ENCODE measurements at regions of chr1 and their contacts with region 1.

Region 1: GRCh38 chr1:184222652-184223052 is 164.2 kb upstream of the C1orf21 start:
- DNase-seq: no peak
- H3K4me3 ChIP-seq: peak overlapping the region; percentile 32
- H3K27ac ChIP-seq: no peak overlapping the region
- H3K27me3 ChIP-seq: peaks cover 2% of the 10 kb centered on the region
- CTCF ChIP-seq: peak; percentile 97

Region 2: DNA sequence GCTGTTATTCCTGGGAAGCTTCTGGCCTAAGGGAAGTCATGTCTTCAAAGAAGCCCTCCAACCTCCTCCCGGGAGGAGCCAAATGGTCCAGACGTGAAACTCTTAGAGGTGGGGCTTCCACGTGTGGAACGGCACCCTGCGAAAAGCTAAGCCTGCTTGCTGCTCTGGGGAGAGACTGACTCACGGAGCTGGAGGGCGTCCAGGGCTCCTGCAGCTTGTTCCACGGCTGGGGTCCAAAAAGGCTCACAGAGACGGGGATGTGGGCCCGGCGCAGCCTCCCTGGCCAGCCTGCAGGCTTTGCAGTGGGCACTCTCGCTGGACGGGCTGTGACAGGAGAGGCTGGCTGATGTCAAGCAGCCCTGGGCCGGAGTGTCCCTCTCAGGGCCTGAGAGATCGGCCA is 290.2 kb before region 1 on chr1:
- CTCF ChIA-PET with region 1: no interaction called
- POLR2A ChIA-PET with region 1: interaction called, 14 read pairs
- DNase-seq: peak; percentile 78
- H3K4me3 ChIP-seq: no peak overlapping the region
- H3K27ac ChIP-seq: no peak overlapping the region
- H3K27me3 ChIP-seq: no peaks in the 10 kb centered on the region
- CTCF ChIP-seq: no peak

Region 3: GRCh38 chr1:184075055-184076029 is 147.3 kb before region 1 on chr1:
- CTCF ChIA-PET with region 1: interaction called, 15 read pairs
- POLR2A ChIA-PET with region 1: no interaction called
- DNase-seq: no peak
- H3K4me3 ChIP-seq: no peak overlapping the region
- H3K27ac ChIP-seq: no peak overlapping the region
- H3K27me3 ChIP-seq: no peaks in the 10 kb centered on the region
- CTCF ChIP-seq: peak; percentile 80

Measured in AG04450 (cell line).